Activated naive CD4-positive, alpha-beta T cell treated with anti-CD3 and anti-CD28 coated beads for 36 hours (primary cell): ENCODE measurements at regions of chr16 and their contacts with region 1.

Region 1: GRCh38 chr16:58000706-58001676 is at the start of gene USB1:
- DNase-seq: peak; percentile 78
- H3K4me3 Mint-ChIP-seq: peak within 1 kb of the TSS; percentile 91
- H3K27ac Mint-ChIP-seq: peak within 1 kb of the TSS; percentile 71
- H3K4me1 Mint-ChIP-seq: peaks cover 51% of the 10 kb centered on the region
- H3K27me3 Mint-ChIP-seq: no peaks in the 10 kb centered on the region
- total RNA-seq, gene USB1: 30.6 to 32.3 TPM

Region 2: GRCh38 chr16:57462209-57462977 is 538.6 kb before region 1 on chr16 and contains the start of gene POLR2C:
- CTCF ChIA-PET with region 1: no interaction called
- intact Hi-C with region 1: loop called (anchors 10 kb)
- DNase-seq: peak; percentile 95
- H3K4me3 Mint-ChIP-seq: peak within 1 kb of the TSS; percentile 100
- H3K27ac Mint-ChIP-seq: peak within 1 kb of the TSS; percentile 99
- H3K4me1 Mint-ChIP-seq: peaks cover 30% of the 10 kb centered on the region
- H3K27me3 Mint-ChIP-seq: no peaks in the 10 kb centered on the region
- total RNA-seq, gene POLR2C: 49.4 to 53.0 TPM

Region 3: DNA sequence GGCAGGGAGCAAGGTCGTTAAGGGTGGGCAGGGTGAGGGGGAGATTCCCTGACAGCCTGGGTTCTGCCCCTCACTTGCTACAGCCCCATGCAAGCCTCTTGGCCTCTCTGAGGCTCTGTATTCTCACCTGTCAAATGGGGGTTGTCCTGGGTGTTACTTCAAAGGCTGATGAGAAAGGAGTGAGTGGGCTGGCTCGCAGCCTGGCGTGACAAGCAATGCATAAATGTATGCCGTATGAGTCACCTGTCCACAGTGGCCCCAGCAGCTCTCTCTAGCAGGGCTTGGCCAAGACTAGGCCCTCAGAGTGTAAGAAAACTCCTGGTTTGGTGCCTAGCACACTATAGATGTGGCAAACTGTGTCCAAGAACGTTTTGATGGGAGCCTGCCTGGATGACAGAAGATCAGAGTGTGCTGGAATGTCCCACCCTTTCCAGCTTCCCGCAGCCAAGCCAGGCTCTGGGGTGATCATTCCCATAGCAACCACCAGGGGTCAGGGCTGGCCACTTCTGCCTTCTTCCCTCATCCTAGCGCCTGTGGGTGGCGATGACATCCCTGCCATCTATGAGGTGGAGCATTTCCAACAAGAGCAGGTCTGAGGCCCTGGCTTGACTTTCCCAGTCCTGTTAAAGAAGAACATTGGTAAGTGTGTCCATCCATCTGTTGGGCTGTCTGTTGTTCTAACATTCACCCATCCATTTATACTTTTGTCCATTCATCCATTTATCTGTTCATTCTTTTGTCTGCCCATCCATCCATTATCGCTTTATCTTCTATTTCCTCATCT is 409.7 kb before region 1 on chr16:
- CTCF ChIA-PET with region 1: no interaction called
- intact Hi-C with region 1: loop called (anchors 1 kb)
- DNase-seq: peak; percentile 89
- H3K4me3 Mint-ChIP-seq: peak overlapping the region; percentile 40
- H3K27ac Mint-ChIP-seq: peak overlapping the region; percentile 90
- H3K4me1 Mint-ChIP-seq: peaks cover 32% of the 10 kb centered on the region
- H3K27me3 Mint-ChIP-seq: no peaks in the 10 kb centered on the region

Region 4: GRCh38 chr16:57757326-57757786 is 243.6 kb before region 1 on chr16:
- CTCF ChIA-PET with region 1: no interaction called
- intact Hi-C with region 1: loop called (anchors 1 kb)
- DNase-seq: peak; percentile 94
- H3K4me3 Mint-ChIP-seq: no peak overlapping the region
- H3K27ac Mint-ChIP-seq: no peak overlapping the region
- H3K4me1 Mint-ChIP-seq: no peaks in the 10 kb centered on the region
- H3K27me3 Mint-ChIP-seq: no peaks in the 10 kb centered on the region

Region 5: GRCh38 chr16:57802341-57803133 is 198.5 kb before region 1 on chr16 and contains the start of gene KIFC3:
- CTCF ChIA-PET with region 1: no interaction called
- intact Hi-C with region 1: loop called (anchors 2 kb)
- DNase-seq: peak; percentile 82
- H3K4me3 Mint-ChIP-seq: peak within 1 kb of the TSS; percentile 69
- H3K27ac Mint-ChIP-seq: no peak within 1 kb of the TSS
- H3K4me1 Mint-ChIP-seq: peaks cover 23% of the 10 kb centered on the region
- H3K27me3 Mint-ChIP-seq: peaks cover 33% of the 10 kb centered on the region
- total RNA-seq, gene KIFC3: 0.12 TPM in 1 of 2 experiments, not detected in the other

Region 6: DNA sequence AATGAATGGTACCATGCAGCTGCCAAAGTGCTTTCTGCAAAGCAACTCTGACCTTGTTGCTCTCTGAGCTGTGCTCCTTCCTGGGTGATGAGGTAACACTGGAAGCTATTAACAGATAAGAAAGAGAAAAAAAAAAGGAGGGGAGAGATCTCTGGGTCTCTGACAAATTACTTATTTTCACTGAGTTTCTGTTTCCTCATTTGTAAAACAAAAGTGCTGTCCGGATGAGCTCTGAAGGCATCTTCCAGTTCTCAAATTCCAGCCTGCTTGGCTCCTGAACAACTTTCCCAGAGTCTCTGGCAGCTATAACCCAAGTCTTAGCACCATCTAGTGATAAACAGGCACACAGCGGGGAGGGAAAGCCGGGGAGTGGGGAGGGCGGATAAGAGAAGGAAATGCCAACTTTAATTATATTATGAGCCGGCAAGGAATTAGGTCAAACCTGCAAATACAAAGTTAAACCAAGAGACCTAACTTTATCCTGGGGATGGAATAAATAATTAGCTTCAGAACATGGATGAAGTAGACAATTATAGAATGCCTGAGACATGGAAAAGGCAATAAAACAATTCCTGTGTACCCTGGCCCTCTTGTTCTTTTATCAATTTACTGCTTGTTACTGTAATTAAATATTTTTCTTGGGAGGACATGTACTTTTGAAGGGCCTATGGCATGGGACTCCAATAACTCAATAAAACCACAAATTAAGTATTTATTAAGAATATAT is 137.4 kb before region 1 on chr16:
- CTCF ChIA-PET with region 1: no interaction called
- intact Hi-C with region 1: no loop called
- DNase-seq: peak; percentile 22
- H3K4me3 Mint-ChIP-seq: no peak overlapping the region
- H3K27ac Mint-ChIP-seq: no peak overlapping the region
- H3K4me1 Mint-ChIP-seq: no peaks in the 10 kb centered on the region
- H3K27me3 Mint-ChIP-seq: peaks cover 14% of the 10 kb centered on the region

Region 7: GRCh38 chr16:57984331-57985203 is 16.4 kb before region 1 on chr16:
- CTCF ChIA-PET with region 1: interaction called, 4 read pairs
- intact Hi-C with region 1: loop called (anchors 1 kb)
- DNase-seq: peak; percentile 95
- H3K4me3 Mint-ChIP-seq: peak overlapping the region; percentile 83
- H3K27ac Mint-ChIP-seq: no peak overlapping the region
- H3K4me1 Mint-ChIP-seq: peaks cover 9% of the 10 kb centered on the region
- H3K27me3 Mint-ChIP-seq: no peaks in the 10 kb centered on the region

Region 8: GRCh38 chr16:58733671-58734458 is 732.9 kb after region 1 on chr16 and contains the start of gene GOT2:
- CTCF ChIA-PET with region 1: no interaction called
- intact Hi-C with region 1: loop called (anchors 1 kb)
- DNase-seq: peak; percentile 83
- H3K4me3 Mint-ChIP-seq: peak within 1 kb of the TSS; percentile 95
- H3K27ac Mint-ChIP-seq: peak within 1 kb of the TSS; percentile 84
- H3K4me1 Mint-ChIP-seq: peaks cover 42% of the 10 kb centered on the region
- H3K27me3 Mint-ChIP-seq: no peaks in the 10 kb centered on the region
- total RNA-seq, gene GOT2: 156 to 162 TPM

Region 9: DNA sequence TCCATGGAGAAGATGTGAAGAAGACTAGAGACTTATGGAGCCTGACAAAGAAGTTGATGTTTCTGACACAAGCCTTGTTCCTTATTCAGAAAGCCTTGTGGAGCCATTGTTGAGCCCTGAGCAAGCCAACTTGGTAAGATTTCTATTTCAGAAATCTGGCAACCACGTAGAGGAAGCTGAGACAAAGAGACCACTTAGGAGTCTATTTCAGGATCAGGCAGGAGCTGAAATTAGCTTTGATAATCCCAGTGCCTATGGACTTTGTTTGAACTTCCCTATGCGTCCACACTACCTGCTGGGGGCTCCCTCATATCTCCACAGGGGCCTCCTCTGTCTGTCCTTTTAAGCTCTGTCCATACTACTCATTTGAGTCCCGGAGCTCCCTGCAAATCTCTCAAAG is 1273.2 kb after region 1 on chr16:
- CTCF ChIA-PET with region 1: no interaction called
- intact Hi-C with region 1: no loop called
- DNase-seq: no peak
- H3K4me3 Mint-ChIP-seq: no peak overlapping the region
- H3K27ac Mint-ChIP-seq: no peak overlapping the region
- H3K4me1 Mint-ChIP-seq: no peaks in the 10 kb centered on the region
- H3K27me3 Mint-ChIP-seq: no peaks in the 10 kb centered on the region